ENCODE measurements at regions of chr5 and their contacts with region 1.

Region 1: GRCh38 chr5:89606933-89607534 is 724.0 kb upstream of the MEF2C start:
- DNase-seq: no peak
- ATAC-seq: no peak
- H3K4me3 ChIP-seq: no peak overlapping the region
- H3K27ac ChIP-seq: no peak overlapping the region
- H3K4me1 ChIP-seq: no peaks in the 10 kb centered on the region
- H3K27me3 ChIP-seq: no peaks in the 10 kb centered on the region
- CTCF ChIP-seq: no peak
- EP300 ChIP-seq: no peak
- POLR2A ChIP-seq: no peak
- RAD21 ChIP-seq: no peak

Region 2: DNA sequence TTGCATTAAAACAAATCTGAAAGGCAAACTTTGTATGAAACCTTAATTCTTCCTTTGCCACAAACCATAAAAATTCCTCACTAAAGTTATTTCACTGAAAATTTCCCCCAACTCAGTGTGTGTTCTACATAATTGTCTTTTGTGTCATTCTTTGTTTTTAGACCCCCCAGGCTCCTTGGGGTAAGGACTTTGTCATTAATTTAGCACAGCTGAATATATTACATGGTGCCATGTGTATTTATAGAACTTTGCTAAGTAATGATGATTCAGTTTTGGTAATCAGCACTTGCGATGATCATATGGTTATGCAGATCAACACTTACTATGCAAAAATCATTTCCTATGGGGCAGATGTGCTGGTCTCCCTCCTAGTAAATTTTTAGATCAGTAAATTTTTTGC is 12.0 kb before region 1 on chr5:
- CTCF ChIA-PET with region 1: no interaction called
- POLR2A ChIA-PET with region 1: no interaction called
- RAD21 ChIA-PET with region 1: no interaction called
- SMC1A ChIA-PET with region 1: interaction called, 10 read pairs
- in situ Hi-C with region 1: no loop called
- intact Hi-C with region 1: no loop called
- DNase-seq: no peak
- ATAC-seq: no peak
- H3K4me3 ChIP-seq: no peak overlapping the region
- H3K27ac ChIP-seq: no peak overlapping the region
- H3K4me1 ChIP-seq: peaks cover 3% of the 10 kb centered on the region; the same call in 1 of the 2 replicates
- H3K27me3 ChIP-seq: no peaks in the 10 kb centered on the region
- CTCF ChIP-seq: no peak
- EP300 ChIP-seq: no peak
- POLR2A ChIP-seq: no peak
- RAD21 ChIP-seq: no peak